ENCODE measurements at regions of chr9 and their contacts with region 1.

Region 1: GRCh38 chr9:14030375-14031059 is 283.4 kb downstream of the NFIB start:
- DNase-seq: peak; percentile 97
- H3K4me3 ChIP-seq: peak overlapping the region in 2 of 3 experiments; percentile 25 to 46
- H3K27ac ChIP-seq: peak overlapping the region; percentile 88
- H3K4me1 ChIP-seq: peaks cover 44% of the 10 kb centered on the region
- H3K27me3 ChIP-seq: no peaks in the 10 kb centered on the region
- CTCF ChIP-seq: no peak
- POLR2A ChIP-seq: peak; percentile 31

Region 2: DNA sequence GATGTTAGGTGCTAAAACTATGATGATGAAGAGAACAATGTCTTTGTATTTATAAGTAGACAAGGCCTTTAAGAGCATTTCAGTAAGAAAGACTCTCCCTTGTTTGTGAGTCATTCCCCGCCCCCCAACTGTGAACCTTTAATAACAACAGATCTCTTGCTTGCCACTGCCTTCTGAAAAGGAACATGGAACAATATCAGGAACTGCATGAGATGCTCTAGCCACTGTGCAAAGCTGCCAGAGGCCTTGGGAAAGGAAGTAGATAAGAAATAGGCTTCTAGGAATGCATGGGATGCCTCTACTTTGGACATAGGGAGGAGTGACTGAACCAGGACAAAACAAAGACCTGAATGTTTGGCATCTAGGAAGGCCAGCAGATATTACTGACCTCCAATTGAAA is 455.0 kb before region 1 on chr9:
- CTCF ChIA-PET with region 1: no interaction called
- POLR2A ChIA-PET with region 1: no interaction called
- dilution Hi-C with region 1: no loop called
- intact Hi-C with region 1: loop called (anchors 5 kb)
- DNase-seq: peak; percentile 95
- H3K4me3 ChIP-seq: no peak overlapping the region
- H3K27ac ChIP-seq: peak overlapping the region; percentile 89
- H3K4me1 ChIP-seq: peaks cover 23% of the 10 kb centered on the region
- H3K27me3 ChIP-seq: no peaks in the 10 kb centered on the region
- CTCF ChIP-seq: no peak
- POLR2A ChIP-seq: no peak

Region 3: GRCh38 chr9:13750061-13750460 is 280.5 kb before region 1 on chr9:
- CTCF ChIA-PET with region 1: no interaction called
- POLR2A ChIA-PET with region 1: no interaction called
- dilution Hi-C with region 1: no loop called
- intact Hi-C with region 1: loop called (anchors 5 kb)
- DNase-seq: peak; percentile 96
- H3K4me3 ChIP-seq: no peak overlapping the region
- H3K27ac ChIP-seq: peak overlapping the region; percentile 72
- H3K4me1 ChIP-seq: peaks cover 17% of the 10 kb centered on the region
- H3K27me3 ChIP-seq: no peaks in the 10 kb centered on the region
- CTCF ChIP-seq: no peak
- POLR2A ChIP-seq: peak; percentile 49

Region 4: GRCh38 chr9:14056316-14056861 is 25.9 kb after region 1 on chr9:
- CTCF ChIA-PET with region 1: interaction called, 3 read pairs
- POLR2A ChIA-PET with region 1: no interaction called
- dilution Hi-C with region 1: no loop called
- intact Hi-C with region 1: loop called (anchors 2 kb)
- DNase-seq: peak; percentile 91
- H3K4me3 ChIP-seq: peak overlapping the region in 1 of 3 experiments; percentile 37
- H3K27ac ChIP-seq: peak overlapping the region; percentile 78
- H3K4me1 ChIP-seq: peaks cover 35% of the 10 kb centered on the region
- H3K27me3 ChIP-seq: no peaks in the 10 kb centered on the region
- CTCF ChIP-seq: no peak
- POLR2A ChIP-seq: peak; percentile 41